Gastrocnemius medialis (tissue), 4 donors: ENCODE measurements at regions of chr11 and their contacts with region 1.

Region 1: GRCh38 chr11:108697872-108698473 is 33.1 kb downstream of the DDX10 start:
- DNase-seq: peak in 1 of 2 donors; percentile 21
- ATAC-seq: peak in 1 of 2 donors; percentile 81
- H3K4me3 ChIP-seq: no peak overlapping the region
- H3K27ac ChIP-seq: no peak overlapping the region
- H3K4me1 ChIP-seq: no peaks in the 10 kb centered on the region
- H3K27me3 ChIP-seq: no peaks in the 10 kb centered on the region
- CTCF ChIP-seq: peak; percentile 60 to 85 (median 78)
- POLR2A ChIP-seq: no peak

Region 2: DNA sequence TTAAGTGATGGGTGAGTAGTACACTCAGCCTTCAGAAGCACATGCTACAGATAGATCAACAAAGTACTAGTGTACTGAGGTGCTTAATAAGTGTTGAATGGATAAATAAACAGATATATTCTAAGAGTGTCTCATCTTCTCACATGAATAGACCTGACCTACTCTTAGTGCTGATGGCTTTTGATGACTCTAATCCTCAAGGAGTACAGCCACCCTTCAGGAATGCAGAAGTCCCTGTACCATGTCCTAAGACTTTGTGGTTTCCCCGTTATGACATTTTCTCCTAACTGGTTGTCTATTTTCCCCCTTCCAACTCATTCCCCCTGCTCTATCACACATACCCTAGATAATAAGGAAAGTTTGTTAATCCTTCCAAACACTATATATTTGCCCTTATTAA is 292.3 kb before region 1 on chr11:
- in situ Hi-C with region 1: no loop called
- intact Hi-C with region 1: no loop called
- DNase-seq: no peak
- ATAC-seq: no peak
- H3K4me3 ChIP-seq: no peak overlapping the region
- H3K27ac ChIP-seq: no peak overlapping the region
- H3K4me1 ChIP-seq: no peaks in the 10 kb centered on the region
- H3K27me3 ChIP-seq: no peaks in the 10 kb centered on the region
- CTCF ChIP-seq: no peak
- POLR2A ChIP-seq: no peak

Region 3: DNA sequence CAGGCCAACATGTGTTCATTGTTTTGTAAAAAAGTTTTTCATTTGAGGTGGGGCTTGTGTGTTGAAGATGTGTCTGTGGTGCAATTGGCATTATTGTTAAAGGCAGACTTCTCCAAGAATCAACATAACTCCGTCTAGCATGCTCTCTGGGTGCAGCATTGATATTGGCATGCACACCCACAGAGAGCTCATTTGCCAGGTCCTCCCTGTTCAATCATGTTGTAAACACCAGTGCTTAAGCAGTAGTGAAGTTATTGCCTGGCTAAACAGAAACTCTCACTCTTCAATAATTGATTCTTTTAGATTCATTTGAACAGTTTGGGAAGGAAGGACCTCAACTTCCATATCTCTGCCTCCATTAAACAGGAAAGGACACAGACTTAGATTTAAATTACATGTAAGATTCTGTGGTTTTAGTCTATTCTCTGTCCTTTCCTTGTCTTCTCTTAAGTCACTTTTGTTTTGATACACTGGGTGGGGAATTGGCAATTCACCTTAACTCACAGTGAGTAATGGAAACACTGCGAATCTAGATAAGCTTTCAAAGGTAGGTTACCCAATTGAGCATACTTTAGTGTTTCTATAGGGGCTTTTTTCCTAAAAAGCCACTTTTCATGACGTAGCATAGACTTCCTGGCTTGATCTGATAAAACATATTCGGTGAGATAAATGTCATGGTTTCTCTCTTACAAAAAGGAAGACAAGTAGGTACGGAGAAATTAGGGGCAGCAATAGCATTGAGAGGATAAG is 73.6 kb before region 1 on chr11:
- in situ Hi-C with region 1: no loop called
- intact Hi-C with region 1: no loop called
- DNase-seq: no peak
- ATAC-seq: no peak
- H3K4me3 ChIP-seq: no peak overlapping the region
- H3K27ac ChIP-seq: no peak overlapping the region
- H3K4me1 ChIP-seq: no peaks in the 10 kb centered on the region
- H3K27me3 ChIP-seq: no peaks in the 10 kb centered on the region
- CTCF ChIP-seq: no peak
- POLR2A ChIP-seq: no peak

Region 4: DNA sequence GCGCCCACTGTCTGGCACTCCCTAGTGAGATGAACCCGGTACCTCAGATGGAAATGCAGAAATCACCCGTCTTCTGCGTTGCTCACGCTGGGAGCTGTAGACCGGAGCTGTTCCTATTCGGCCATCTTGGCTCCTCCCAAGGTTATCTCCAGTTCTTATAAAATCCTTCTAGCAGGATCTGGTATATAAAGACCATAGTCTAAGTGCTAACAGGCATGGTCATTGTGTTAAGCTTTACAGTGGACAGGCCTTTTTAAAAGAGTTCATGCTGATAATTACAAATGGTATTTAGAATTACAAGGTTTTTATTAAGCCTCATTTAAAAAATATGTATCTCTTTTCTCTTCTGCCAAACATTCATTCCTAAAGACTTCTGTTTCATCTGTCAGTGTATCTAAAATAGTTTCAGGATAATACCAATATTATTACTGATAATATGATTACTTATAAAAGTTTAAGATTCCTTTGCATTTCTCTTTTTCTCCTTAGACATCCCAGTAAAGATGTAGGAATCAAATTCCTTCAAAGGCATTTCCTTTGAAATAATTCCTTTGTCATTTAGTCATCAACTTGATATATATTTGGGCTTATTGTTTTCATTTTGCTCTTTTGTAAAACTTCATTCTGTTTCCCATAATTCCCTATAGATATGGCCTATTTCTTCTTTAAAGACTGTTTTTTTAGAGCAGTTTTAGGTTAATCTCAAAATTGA is 12.4 kb before region 1 on chr11:
- in situ Hi-C with region 1: no loop called
- intact Hi-C with region 1: no loop called
- DNase-seq: no peak
- ATAC-seq: no peak
- H3K4me3 ChIP-seq: no peak overlapping the region
- H3K27ac ChIP-seq: no peak overlapping the region
- H3K4me1 ChIP-seq: no peaks in the 10 kb centered on the region
- H3K27me3 ChIP-seq: no peaks in the 10 kb centered on the region
- CTCF ChIP-seq: no peak
- POLR2A ChIP-seq: no peak

Region 5: GRCh38 chr11:108754901-108755632 is 57.1 kb after region 1 on chr11:
- in situ Hi-C with region 1: no loop called
- intact Hi-C with region 1: no loop called
- DNase-seq: peak; percentile 24 to 43
- ATAC-seq: peak; percentile 72 to 73
- H3K4me3 ChIP-seq: no peak overlapping the region
- H3K27ac ChIP-seq: no peak overlapping the region
- H3K4me1 ChIP-seq: peaks cover 6 to 25% of the 10 kb centered on the region in 2 donors
- H3K27me3 ChIP-seq: no peaks in the 10 kb centered on the region
- CTCF ChIP-seq: no peak
- POLR2A ChIP-seq: no peak

Region 6: GRCh38 chr11:108871152-108871551 is 173.2 kb after region 1 on chr11:
- in situ Hi-C with region 1: no loop called
- intact Hi-C with region 1: loop called (anchors 2 kb)
- DNase-seq: no peak
- ATAC-seq: no peak
- H3K4me3 ChIP-seq: no peak overlapping the region
- H3K27ac ChIP-seq: no peak overlapping the region
- H3K4me1 ChIP-seq: no peaks in the 10 kb centered on the region
- H3K27me3 ChIP-seq: no peaks in the 10 kb centered on the region
- CTCF ChIP-seq: peak in 3 of 5 experiments; percentile 20 to 37 (median 32)
- POLR2A ChIP-seq: no peak

Region 7: DNA sequence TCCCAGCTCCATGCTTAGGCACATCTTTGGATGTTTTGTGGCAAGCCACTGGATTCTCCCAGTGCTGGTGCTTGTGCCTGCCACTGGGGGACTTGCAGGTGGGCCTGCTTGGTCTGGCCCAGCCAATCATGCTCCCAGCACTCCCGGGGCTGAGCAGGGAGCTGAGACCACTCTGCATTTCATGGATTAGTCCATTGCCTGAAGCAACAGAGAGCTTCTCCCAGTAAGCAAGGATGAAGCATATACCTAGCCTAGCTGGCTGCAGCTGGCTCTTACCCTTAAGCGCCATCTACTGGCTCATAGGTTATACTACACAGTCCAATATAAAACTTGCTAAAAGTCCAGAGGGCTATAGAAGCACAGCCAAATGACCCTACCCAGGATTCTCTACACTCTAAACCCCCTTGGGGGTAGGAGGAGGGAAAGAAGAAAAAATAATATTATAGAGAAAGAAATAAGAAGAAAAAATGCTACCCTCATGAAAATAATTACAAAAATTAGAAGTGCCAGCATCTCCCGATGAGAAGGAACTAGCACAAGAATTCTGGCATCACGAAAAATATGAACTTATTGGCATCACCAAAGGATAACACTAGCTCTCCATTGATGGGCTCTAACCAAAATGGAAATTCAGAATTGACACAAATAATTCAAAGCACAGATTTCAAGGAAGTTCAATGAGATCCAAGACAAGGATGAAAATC is 999.3 kb after region 1 on chr11:
- in situ Hi-C with region 1: loop called in 1 of 4 experiments (anchors 25 kb)
- intact Hi-C with region 1: loop called (anchors 5 kb)
- DNase-seq: no peak
- ATAC-seq: no peak
- H3K4me3 ChIP-seq: no peak overlapping the region
- H3K27ac ChIP-seq: no peak overlapping the region
- H3K4me1 ChIP-seq: no peaks in the 10 kb centered on the region
- H3K27me3 ChIP-seq: no peaks in the 10 kb centered on the region
- CTCF ChIP-seq: peak in 2 of 5 experiments; percentile 33 to 37
- POLR2A ChIP-seq: no peak

Region 8: GRCh38 chr11:109939166-109939810 is 1241.3 kb after region 1 on chr11:
- in situ Hi-C with region 1: loop called in 2 of 4 experiments (anchors 25 kb)
- intact Hi-C with region 1: loop called (anchors 2 kb)
- DNase-seq: peak in 1 of 2 donors; percentile 9
- ATAC-seq: peak; percentile 73 to 95
- H3K4me3 ChIP-seq: no peak overlapping the region
- H3K27ac ChIP-seq: no peak overlapping the region
- H3K4me1 ChIP-seq: peaks cover 0 to 3% of the 10 kb centered on the region in 2 donors
- H3K27me3 ChIP-seq: no peaks in the 10 kb centered on the region
- CTCF ChIP-seq: peak in 4 of 5 experiments; percentile 26 to 61 (median 46)
- POLR2A ChIP-seq: no peak